B cell (primary cell): ENCODE measurements at regions of chr3 and their contacts with region 1.

Region 1: GRCh38 chr3:50121416-50122032 is 32.8 kb downstream of the RBM5 start:
- DNase-seq: peak; percentile 82
- ATAC-seq: peak; percentile 80
- H3K4me3 ChIP-seq: no peak overlapping the region
- H3K4me3 Mint-ChIP-seq: no peak overlapping the region
- H3K27ac ChIP-seq: no peak overlapping the region
- H3K27ac Mint-ChIP-seq: no peak overlapping the region
- H3K4me1 ChIP-seq: no peaks in the 10 kb centered on the region
- H3K4me1 Mint-ChIP-seq: peaks cover 2% of the 10 kb centered on the region
- H3K27me3 ChIP-seq: peaks cover 0 to 2% (median 0%) of the 10 kb centered on the region in 4 experiments
- H3K27me3 Mint-ChIP-seq: no peaks in the 10 kb centered on the region
- CTCF ChIP-seq: peak; percentile 91

Region 2: GRCh38 chr3:50136714-50137405 is 15.3 kb after region 1 on chr3:
- CTCF ChIA-PET with region 1: interaction called, 18 read pairs
- POLR2A ChIA-PET with region 1: interaction called, 3 read pairs
- intact Hi-C with region 1: no loop called
- DNase-seq: no peak
- ATAC-seq: no peak
- H3K4me3 ChIP-seq: no peak overlapping the region
- H3K4me3 Mint-ChIP-seq: no peak overlapping the region
- H3K27ac ChIP-seq: no peak overlapping the region
- H3K27ac Mint-ChIP-seq: no peak overlapping the region
- H3K4me1 ChIP-seq: no peaks in the 10 kb centered on the region
- H3K4me1 Mint-ChIP-seq: no peaks in the 10 kb centered on the region
- H3K27me3 ChIP-seq: peaks cover 0 to 15% (median 0%) of the 10 kb centered on the region in 4 experiments
- H3K27me3 Mint-ChIP-seq: peaks cover 4% of the 10 kb centered on the region
- CTCF ChIP-seq: no peak

Region 3: DNA sequence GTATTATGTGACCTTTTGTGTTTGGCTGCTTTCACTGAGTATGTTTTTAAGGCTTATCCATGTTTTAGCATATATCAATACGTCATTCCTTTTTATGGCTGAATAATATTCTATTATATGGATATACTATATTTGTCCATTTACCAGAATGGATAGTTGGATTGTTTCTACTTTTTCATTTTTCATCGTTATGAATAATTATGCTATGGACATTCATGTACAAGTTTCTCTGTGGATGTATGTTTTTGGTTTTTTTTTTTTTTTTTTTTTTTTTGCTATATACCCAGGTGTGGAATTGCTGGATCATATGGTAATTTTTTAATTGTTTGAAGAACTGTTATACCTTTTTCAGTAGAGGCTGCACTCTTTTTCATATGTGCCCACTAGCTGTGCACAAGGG is 576.7 kb after region 1 on chr3:
- CTCF ChIA-PET with region 1: no interaction called
- POLR2A ChIA-PET with region 1: no interaction called
- intact Hi-C with region 1: no loop called
- DNase-seq: no peak
- ATAC-seq: no peak
- H3K4me3 ChIP-seq: no peak overlapping the region
- H3K4me3 Mint-ChIP-seq: no peak overlapping the region
- H3K27ac ChIP-seq: no peak overlapping the region
- H3K27ac Mint-ChIP-seq: no peak overlapping the region
- H3K4me1 ChIP-seq: no peaks in the 10 kb centered on the region
- H3K4me1 Mint-ChIP-seq: no peaks in the 10 kb centered on the region
- H3K27me3 ChIP-seq: peaks cover 0 to 2% (median 0%) of the 10 kb centered on the region in 4 experiments
- H3K27me3 Mint-ChIP-seq: peaks cover 32% of the 10 kb centered on the region
- CTCF ChIP-seq: no peak